ENCODE measurements at regions of chr1 and their contacts with region 1.

Region 1: GRCh38 chr1:93708734-93709481 is 27.3 kb upstream of the BCAR3 start:
- DNase-seq: peak; percentile 13
- H3K4me3 Mint-ChIP-seq: no peak overlapping the region
- H3K27ac Mint-ChIP-seq: no peak overlapping the region
- H3K4me1 Mint-ChIP-seq: peaks cover 27% of the 10 kb centered on the region
- H3K27me3 Mint-ChIP-seq: peaks cover 13% of the 10 kb centered on the region

Region 2: GRCh38 chr1:93607814-93608186 is 101.1 kb before region 1 on chr1:
- CTCF ChIA-PET with region 1: interaction called, 3 read pairs
- intact Hi-C with region 1: loop called (anchors 5 kb)
- DNase-seq: peak; percentile 78
- H3K4me3 Mint-ChIP-seq: no peak overlapping the region
- H3K27ac Mint-ChIP-seq: no peak overlapping the region
- H3K4me1 Mint-ChIP-seq: peaks cover 25% of the 10 kb centered on the region
- H3K27me3 Mint-ChIP-seq: peaks cover 21% of the 10 kb centered on the region

Region 3: DNA sequence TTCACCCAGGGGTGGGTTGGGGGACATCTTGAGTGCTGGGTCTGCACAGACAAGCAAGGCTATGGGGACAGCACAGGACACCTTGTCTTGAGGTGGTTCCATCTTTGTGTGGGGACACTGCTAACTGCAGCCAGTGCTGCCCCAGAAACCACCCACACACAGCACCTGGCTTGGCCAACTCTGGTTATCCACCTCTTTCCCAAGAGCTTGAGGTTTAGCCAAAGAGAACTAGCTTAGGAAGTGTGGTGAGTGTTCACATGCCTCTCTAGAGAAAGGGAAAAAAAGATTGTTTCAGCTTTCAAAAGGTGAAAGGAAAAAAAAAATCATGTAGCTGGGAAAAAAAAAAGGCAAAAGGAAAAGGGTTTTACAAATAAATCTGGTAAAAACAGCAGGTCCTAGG is 59.7 kb before region 1 on chr1:
- CTCF ChIA-PET with region 1: no interaction called
- intact Hi-C with region 1: no loop called
- DNase-seq: no peak
- H3K4me3 Mint-ChIP-seq: no peak overlapping the region
- H3K27ac Mint-ChIP-seq: no peak overlapping the region
- H3K4me1 Mint-ChIP-seq: peaks cover under 1% of the 10 kb centered on the region
- H3K27me3 Mint-ChIP-seq: no peaks in the 10 kb centered on the region

Region 4: GRCh38 chr1:93661829-93662474 is 47.0 kb before region 1 on chr1:
- CTCF ChIA-PET with region 1: no interaction called
- intact Hi-C with region 1: no loop called
- DNase-seq: no peak
- H3K4me3 Mint-ChIP-seq: no peak overlapping the region
- H3K27ac Mint-ChIP-seq: no peak overlapping the region
- H3K4me1 Mint-ChIP-seq: no peaks in the 10 kb centered on the region
- H3K27me3 Mint-ChIP-seq: no peaks in the 10 kb centered on the region

Region 5: DNA sequence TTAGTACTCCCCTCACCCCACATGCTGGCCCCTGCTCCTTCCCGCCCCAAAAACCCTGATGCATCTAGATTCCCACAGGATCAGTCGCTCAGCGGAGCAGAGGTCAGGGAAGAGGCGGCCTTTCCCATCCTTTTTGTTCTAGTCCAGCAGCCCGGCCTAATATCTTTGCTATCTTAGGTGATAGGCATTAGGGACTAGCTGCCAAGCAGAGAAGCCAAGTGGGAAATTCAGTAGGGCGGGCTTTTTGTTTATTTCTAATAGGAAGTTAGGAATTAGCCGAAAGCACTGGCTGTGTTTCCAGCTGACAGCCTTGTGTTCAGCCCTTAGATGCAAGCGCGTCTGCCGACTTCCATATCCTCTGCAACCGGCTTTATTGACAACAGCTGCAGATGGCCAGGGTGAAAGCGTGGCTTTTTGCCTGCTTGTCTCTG is 31.7 kb after region 1 on chr1:
- CTCF ChIA-PET with region 1: no interaction called
- intact Hi-C with region 1: loop called (anchors 1 kb)
- DNase-seq: no peak
- H3K4me3 Mint-ChIP-seq: no peak overlapping the region
- H3K27ac Mint-ChIP-seq: no peak overlapping the region
- H3K4me1 Mint-ChIP-seq: peaks cover 18% of the 10 kb centered on the region
- H3K27me3 Mint-ChIP-seq: no peaks in the 10 kb centered on the region

Region 6: DNA sequence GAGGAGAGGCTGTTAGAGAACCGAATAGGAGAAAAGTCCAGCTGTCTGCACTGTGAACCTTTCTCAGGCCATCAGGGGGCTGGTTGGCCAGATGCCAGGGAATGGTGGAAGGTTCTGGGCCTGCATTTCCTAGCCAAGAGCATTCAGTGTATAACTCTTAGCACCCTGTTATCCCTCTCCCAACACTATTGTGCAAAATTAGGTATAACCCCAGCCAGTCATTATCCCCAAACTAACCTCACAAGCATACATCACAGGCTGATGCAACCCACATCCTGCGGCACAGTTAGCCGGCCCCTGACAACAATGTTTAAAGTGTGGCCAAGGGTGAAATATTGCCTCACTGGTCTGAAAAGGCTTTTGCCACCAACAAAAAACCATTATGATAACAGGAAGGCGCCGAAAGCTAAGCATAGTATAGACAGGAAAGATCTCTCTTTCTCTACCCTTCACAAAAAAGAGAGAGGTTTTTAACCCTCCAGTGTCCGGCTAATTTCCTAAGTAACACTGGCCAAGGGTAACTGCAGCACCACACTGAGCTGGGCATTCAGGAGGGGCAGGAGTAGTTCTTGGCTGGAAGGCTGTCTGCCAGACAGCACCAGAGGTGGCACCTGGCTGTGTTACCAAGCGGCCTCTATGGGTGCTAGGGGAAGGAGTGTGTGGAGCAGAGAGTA is 50.1 kb after region 1 on chr1:
- CTCF ChIA-PET with region 1: no interaction called
- intact Hi-C with region 1: loop called (anchors 2 kb)
- DNase-seq: peak; percentile 66
- H3K4me3 Mint-ChIP-seq: no peak overlapping the region
- H3K27ac Mint-ChIP-seq: peak overlapping the region; percentile 64
- H3K4me1 Mint-ChIP-seq: peaks cover 7% of the 10 kb centered on the region
- H3K27me3 Mint-ChIP-seq: no peaks in the 10 kb centered on the region

Measured in activated naive CD4-positive, alpha-beta T cell treated with anti-CD3 and anti-CD28 coated beads for 36 hours (primary cell).